ENCODE measurements at regions of chr12 and their contacts with region 1.

Region 1: GRCh38 chr12:109521831-109522230 is 44.4 kb downstream of the UBE3B start:
- DNase-seq: no peak
- ATAC-seq: no peak
- H3K4me3 Mint-ChIP-seq: no peak overlapping the region
- H3K27ac Mint-ChIP-seq: no peak overlapping the region
- H3K4me1 Mint-ChIP-seq: no peaks in the 10 kb centered on the region
- H3K27me3 Mint-ChIP-seq: no peaks in the 10 kb centered on the region

Region 2: GRCh38 chr12:109617491-109617890 is 95.7 kb after region 1 on chr12:
- CTCF ChIA-PET with region 1: no interaction called
- POLR2A ChIA-PET with region 1: no interaction called
- DNase-seq: no peak
- ATAC-seq: no peak
- H3K4me3 Mint-ChIP-seq: no peak overlapping the region
- H3K27ac Mint-ChIP-seq: no peak overlapping the region
- H3K4me1 Mint-ChIP-seq: no peaks in the 10 kb centered on the region
- H3K27me3 Mint-ChIP-seq: peaks cover 20% of the 10 kb centered on the region

Region 3: GRCh38 chr12:109775172-109775881 is 253.5 kb after region 1 on chr12:
- CTCF ChIA-PET with region 1: interaction called, 10 read pairs
- POLR2A ChIA-PET with region 1: no interaction called
- DNase-seq: peak; percentile 81
- ATAC-seq: peak; percentile 84
- H3K4me3 Mint-ChIP-seq: no peak overlapping the region
- H3K27ac Mint-ChIP-seq: no peak overlapping the region
- H3K4me1 Mint-ChIP-seq: peaks cover 16% of the 10 kb centered on the region
- H3K27me3 Mint-ChIP-seq: no peaks in the 10 kb centered on the region